OCI-LY7 (cell line): ENCODE measurements at regions of chr11 and their contacts with region 1.

Region 1: GRCh38 chr11:43788421-43788820 is 92.2 kb upstream of the ALKBH3 start:
- DNase-seq: peak; percentile 79
- H3K4me3 ChIP-seq: peak overlapping the region; percentile 23
- H3K27ac ChIP-seq: peak overlapping the region; percentile 66
- H3K4me1 ChIP-seq: peaks cover 24% of the 10 kb centered on the region
- CTCF ChIP-seq: no peak

Region 2: DNA sequence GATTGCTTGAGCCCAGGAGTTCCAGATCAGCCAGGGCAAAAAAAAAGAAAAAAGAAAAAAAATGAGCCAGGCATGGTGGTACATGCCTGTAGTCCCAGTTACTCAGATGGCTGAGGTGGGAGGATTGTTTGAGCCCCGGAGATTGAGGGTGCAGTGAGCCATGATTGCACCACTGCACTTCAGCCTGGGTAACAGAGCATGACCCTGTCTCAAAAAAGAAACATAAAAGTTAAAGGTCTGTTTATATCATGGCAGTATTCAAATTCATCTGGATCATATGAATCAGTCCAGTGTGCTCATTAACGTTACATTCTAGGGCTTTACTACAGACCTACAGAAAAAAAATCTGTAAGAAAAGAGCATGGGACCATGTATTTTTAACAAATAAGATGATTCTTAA is 93.9 kb before region 1 on chr11:
- CTCF ChIA-PET with region 1: no interaction called
- POLR2A ChIA-PET with region 1: interaction called, 10 read pairs
- intact Hi-C with region 1: no loop called
- DNase-seq: peak; percentile 75
- H3K4me3 ChIP-seq: peak overlapping the region; percentile 59
- H3K27ac ChIP-seq: peak overlapping the region; percentile 90
- H3K4me1 ChIP-seq: peaks cover 83% of the 10 kb centered on the region
- CTCF ChIP-seq: no peak

Region 3: GRCh38 chr11:43699870-43700269 is 88.6 kb before region 1 on chr11:
- CTCF ChIA-PET with region 1: no interaction called
- POLR2A ChIA-PET with region 1: interaction called, 10 read pairs
- intact Hi-C with region 1: loop called (anchors 5 kb)
- DNase-seq: no peak
- H3K4me3 ChIP-seq: no peak overlapping the region
- H3K27ac ChIP-seq: no peak overlapping the region
- H3K4me1 ChIP-seq: peaks cover 33% of the 10 kb centered on the region
- CTCF ChIP-seq: no peak